Cardiac septum (tissue), 1 donor: ENCODE measurements at regions of chr14 and their contacts with region 1.

Region 1: DNA sequence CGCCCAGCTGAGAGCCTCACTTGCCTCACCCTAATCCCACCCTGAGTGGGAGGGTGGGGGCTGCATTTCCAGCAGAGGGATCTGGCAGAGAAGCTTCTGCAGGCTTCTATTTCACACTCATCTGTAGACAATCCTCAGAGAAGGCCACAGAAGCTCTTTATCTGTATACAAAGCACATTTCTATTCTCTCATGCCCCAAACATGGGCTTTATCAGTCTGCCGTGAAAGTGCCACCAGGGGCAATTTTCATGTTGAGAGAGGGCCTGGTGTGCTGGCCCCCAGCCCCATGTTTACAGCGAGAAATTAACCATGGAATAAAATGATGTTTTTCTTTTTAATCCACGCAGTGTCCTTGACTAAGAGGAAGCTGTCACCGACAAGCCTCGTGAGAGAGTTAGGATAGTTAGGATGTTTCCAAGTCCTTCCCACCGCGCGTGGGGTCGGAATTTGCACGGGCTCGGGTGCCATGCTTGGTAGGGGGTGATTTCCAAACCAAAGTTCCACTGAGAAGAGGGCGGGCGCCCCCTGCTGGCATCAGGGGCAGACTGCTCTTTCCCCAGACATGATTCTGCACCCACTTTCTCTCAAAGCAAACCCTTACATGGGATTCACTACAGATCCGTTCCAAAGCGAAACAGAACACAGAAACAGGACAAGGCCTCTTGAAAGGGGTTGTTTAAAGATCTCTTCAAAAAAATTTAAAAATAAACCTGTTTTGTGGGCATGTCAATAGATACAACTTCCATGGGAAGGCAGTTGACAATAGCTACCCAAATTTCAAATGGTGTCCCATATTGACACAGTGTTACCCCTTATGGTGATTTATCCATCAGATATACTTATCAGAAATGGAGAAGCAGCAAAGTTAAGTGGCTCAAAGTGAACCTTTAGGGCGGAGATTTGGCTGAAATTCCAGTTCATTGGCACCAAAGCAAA is 19.4 kb downstream of the BDKRB1 start:
- DNase-seq: no peak

Region 2: GRCh38 chr14:95561001-95561412 is 714.4 kb before region 1 on chr14:
- intact Hi-C with region 1: loop called (anchors 10 kb)
- DNase-seq: peak; percentile 84

Region 3: DNA sequence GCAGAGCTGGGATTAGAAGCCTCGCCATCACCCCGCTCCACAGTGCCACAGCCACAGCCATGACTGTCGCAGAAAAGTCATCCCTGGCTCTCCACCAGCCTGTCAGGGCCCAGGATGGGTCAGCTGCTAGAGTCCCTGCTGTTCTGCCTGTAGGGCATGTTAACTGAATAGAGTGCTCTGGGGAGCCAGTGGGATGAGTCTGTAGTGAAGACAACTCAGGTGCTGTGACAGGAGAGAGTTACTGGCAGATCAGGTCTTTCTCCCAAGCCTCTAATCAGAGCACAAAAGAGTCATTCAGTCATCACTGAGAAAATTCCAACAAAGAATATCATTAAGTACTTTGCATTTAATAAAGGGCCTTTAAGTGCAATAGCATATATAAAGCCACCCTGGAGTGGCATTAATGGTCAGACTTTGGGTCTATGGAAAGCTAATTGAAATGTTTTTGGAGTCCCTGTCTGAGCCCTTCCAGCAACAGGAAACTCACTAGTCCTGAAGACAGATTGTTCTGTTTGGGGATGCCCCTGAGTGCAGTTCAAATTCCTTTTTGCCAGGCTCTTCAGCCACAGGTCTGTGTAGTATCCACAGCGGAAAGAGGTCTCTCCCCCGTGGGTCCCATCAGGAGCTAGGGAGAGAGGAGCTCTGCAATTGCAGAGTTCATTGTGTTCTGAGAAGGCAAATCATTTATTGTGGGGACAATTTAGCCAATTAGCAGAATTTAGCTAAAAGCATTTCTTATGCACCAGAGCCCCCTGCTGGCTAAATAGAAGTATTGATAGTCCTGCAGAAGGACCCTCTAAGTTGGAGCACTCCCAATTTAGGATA is 281.5 kb before region 1 on chr14:
- intact Hi-C with region 1: loop called (anchors 2 kb)
- DNase-seq: no peak

Region 4: GRCh38 chr14:96100161-96101029 is 175.1 kb before region 1 on chr14:
- intact Hi-C with region 1: loop called (anchors 2 kb)
- DNase-seq: no peak